ENCODE measurements at regions of chr2 and their contacts with region 1.

Region 1: GRCh38 chr2:130154773-130155765 is 10.2 kb upstream of the CCDC74B start:
- DNase-seq: no peak
- ATAC-seq: no peak
- H3K4me3 ChIP-seq: no peak overlapping the region
- H3K27ac ChIP-seq: no peak overlapping the region
- H3K4me1 ChIP-seq: no peaks in the 10 kb centered on the region
- H3K27me3 ChIP-seq: no peaks in the 10 kb centered on the region

Region 2: DNA sequence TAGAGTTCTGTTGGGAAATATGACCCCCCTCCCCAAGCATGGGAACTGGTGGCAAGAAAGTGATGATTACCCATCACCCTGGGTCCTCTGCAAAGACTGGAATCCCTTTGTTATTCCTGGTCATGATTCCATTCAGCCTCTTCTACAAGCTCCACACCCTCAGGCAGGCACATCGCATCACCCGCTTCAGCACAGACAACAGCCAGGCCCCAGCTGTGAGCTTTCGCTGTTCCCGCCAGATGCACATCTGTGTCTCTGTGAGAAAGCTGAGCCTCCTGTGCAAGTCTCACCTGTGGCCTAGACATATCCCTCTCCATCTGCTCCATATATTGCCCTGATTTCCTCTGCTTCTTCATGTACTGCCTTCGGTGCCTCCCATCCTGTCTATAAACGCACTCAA is 543.6 kb before region 1 on chr2:
- intact Hi-C with region 1: no loop called
- DNase-seq: no peak
- ATAC-seq: no peak
- H3K4me3 ChIP-seq: no peak overlapping the region
- H3K27ac ChIP-seq: no peak overlapping the region
- H3K4me1 ChIP-seq: no peaks in the 10 kb centered on the region
- H3K27me3 ChIP-seq: no peaks in the 10 kb centered on the region

Region 3: DNA sequence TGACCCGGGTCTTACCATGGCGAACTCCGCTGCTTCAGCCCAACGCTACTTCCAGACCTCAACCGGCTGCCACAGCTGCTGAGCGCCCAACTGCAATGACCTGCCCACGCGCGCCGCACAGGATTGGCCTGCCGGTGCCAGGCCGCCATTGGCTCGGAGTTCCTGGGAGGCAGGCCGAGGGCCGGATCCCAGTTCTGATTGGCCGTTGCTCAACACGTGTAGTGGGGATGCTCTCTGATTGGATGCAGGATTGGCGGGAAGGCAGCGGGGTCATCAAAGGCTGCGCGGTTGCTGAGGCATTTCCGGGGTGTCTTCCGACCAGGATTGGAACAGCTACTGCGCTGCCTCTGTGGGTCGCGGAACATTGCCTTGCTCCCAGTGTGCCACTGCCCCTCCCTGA is 43.3 kb after region 1 on chr2 and contains the start of gene TUBA3E:
- intact Hi-C with region 1: no loop called
- DNase-seq: no peak
- ATAC-seq: no peak
- H3K4me3 ChIP-seq: no peak within 1 kb of the TSS
- H3K27ac ChIP-seq: no peak within 1 kb of the TSS
- H3K4me1 ChIP-seq: no peaks in the 10 kb centered on the region
- H3K27me3 ChIP-seq: no peaks in the 10 kb centered on the region
- total RNA-seq, gene TUBA3E: 2.8 to 17.2 (median 9.4) TPM

Region 4: DNA sequence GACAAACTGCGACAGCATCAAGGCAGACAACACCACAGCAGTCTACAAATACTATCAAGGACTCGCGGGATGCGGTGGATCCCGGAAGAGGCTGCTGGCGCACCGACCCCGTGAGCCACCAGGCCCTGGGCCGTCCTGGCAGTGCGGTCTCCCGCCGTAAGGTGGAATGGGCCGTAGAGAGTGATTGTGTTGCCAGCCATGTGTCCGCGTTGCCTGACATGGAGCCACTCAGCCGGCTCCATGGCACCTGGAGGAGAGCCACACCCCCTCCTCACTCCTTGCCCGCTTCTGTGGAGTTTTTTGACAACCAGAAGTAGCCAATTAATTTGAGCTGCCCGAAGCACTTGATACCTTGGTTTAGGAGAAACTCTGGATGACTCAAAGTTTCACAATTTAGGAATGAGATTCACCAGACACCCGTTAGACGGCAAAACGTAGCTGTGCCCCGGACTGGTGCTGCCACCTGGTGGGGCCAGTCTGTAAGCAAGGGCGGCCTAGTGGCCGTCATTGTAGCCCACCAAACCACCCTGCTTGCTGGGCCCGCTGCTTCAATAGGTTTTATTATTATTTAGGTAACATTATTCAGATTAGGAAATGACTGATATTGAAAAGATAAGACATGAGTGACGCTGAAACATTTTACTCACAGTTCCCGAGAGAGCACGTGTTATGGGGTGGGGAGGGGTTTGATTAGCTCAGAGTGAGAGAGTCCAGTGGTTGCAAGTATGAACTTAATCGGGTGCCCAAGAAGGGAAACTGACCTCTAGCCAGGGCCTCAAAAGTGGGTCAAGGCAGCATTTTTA is 177.4 kb after region 1 on chr2:
- intact Hi-C with region 1: loop called in 2 of 4 experiments (anchors 5 kb)
- DNase-seq: peak; percentile 76 to 91 (median 88)
- ATAC-seq: peak; percentile 68 to 79
- H3K4me3 ChIP-seq: no peak overlapping the region
- H3K27ac ChIP-seq: no peak overlapping the region
- H3K4me1 ChIP-seq: no peaks in the 10 kb centered on the region
- H3K27me3 ChIP-seq: no peaks in the 10 kb centered on the region

Region 5: GRCh38 chr2:131064589-131065512 is 909.8 kb after region 1 on chr2:
- intact Hi-C with region 1: no loop called
- DNase-seq: peak in 1 of 3 donors; percentile 20
- ATAC-seq: peak in 1 of 2 donors; percentile 35
- H3K4me3 ChIP-seq: no peak overlapping the region
- H3K27ac ChIP-seq: no peak overlapping the region
- H3K4me1 ChIP-seq: peaks cover 5% of the 10 kb centered on the region
- H3K27me3 ChIP-seq: no peaks in the 10 kb centered on the region

Measured in right cardiac atrium (tissue), 5 donors.